ENCODE measurements at regions of chr10 and their contacts with region 1.

Region 1: DNA sequence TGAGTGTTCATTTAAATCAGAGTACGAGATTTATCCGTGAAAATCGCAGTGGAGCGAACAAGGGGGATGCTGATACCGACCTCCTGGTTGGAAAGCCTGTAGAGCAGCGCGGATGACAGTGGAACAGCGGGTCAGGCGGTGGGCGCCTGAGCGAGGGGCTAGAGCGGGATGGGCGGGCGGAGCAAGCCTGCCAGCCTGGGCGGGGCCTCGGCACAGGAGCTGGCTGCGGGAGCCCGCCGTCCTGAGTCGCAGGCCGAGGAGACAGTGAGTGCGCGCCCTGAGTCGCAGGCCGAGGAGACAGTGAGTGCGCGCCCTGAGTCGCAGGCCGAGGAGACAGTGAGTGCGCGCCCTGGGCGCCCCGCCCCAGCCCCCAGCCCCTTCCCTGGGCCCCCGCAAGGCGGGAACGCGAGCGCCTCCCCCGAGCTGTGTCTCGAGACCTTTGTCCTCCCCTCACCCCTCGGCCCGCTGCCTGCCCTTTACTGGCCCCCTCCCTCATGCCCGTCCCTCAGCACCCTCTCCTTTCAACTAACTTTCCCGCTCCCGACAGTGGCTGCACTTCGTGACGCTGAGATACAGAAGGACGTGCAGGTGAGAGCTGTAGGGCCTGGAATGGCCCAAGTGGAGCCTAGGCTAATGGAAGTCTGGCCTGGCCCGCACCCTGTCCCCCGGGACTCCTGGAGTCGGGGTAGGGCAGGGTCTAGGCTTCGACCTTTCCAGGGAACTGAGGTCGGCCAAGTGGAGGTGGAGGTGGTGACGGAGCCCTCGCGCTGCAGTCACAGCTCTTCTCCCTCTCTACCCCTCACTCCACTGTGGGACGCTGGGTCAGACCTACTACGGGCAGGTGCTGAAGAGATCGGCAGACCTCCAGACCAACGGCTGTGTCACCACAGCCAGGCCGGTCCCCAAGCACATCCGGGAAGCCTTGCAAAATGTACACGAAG is at the start of gene AS3MT:
- DNase-seq: peak; percentile 66
- H3K4me3 ChIP-seq: peak within 1 kb of the TSS; percentile 52
- H3K27ac ChIP-seq: peak within 1 kb of the TSS; percentile 65
- H3K4me1 ChIP-seq: no peaks in the 10 kb centered on the region
- H3K27me3 ChIP-seq: no peaks in the 10 kb centered on the region
- CTCF ChIP-seq: no peak
- total RNA-seq, gene AS3MT: 4.8 and 5.2 TPM in 2 replicates

Region 2: GRCh38 chr10:102802920-102803534 is 66.5 kb before region 1 on chr10:
- CTCF ChIA-PET with region 1: no interaction called
- POLR2A ChIA-PET with region 1: interaction called, 16 read pairs
- intact Hi-C with region 1: no loop called
- DNase-seq: peak; percentile 62
- H3K4me3 ChIP-seq: no peak overlapping the region
- H3K27ac ChIP-seq: peak overlapping the region; percentile 60
- H3K4me1 ChIP-seq: peaks cover 37% of the 10 kb centered on the region
- H3K27me3 ChIP-seq: no peaks in the 10 kb centered on the region
- CTCF ChIP-seq: no peak